H1 (cell line): ENCODE measurements at regions of chr10 and their contacts with region 1.

Region 1: DNA sequence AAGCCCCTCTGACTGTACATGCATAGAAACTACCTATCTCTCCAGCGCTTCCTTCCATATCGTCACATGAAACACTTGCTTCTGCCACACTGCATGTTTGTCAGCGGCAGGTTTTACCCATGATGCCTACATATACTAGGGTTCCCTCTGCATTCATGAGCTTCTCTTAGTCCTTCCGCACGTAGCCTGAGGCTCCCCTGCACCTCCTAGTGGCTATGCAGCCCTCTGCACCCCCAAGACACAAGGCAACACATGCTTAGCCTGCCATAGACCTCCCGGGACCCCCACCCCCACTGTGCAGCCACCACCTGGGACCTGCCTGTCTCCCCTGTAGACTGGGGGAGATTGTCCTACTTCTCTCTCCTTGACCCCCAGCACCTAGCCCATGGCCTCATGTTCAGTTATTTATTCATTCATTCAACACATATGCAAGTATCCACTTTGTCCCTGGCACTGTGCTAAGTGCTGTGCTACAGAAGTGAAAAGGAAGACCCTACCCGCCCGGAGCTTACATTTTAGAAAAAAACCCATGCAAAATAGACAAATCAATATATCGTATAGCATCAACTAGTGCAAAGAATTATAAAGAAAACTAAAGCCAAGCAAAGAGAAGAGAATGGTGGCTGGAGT is 23.5 kb downstream of the TMEM273 start:
- DNase-seq: peak in 1 of 2 experiments; percentile 78
- H3K4me3 ChIP-seq: no peak overlapping the region
- H3K27ac ChIP-seq: no peak overlapping the region
- H3K4me1 ChIP-seq: peaks cover 0 to 2% (median 0%) of the 10 kb centered on the region in 4 experiments; a peak in 2 of 7 replicates
- H3K27me3 ChIP-seq: no peaks in the 10 kb centered on the region
- CTCF ChIP-seq: peak; percentile 74 to 97 (median 92)
- EP300 ChIP-seq: no peak
- POLR2A ChIP-seq: no peak
- RAD21 ChIP-seq: peak; percentile 80 to 87

Region 2: DNA sequence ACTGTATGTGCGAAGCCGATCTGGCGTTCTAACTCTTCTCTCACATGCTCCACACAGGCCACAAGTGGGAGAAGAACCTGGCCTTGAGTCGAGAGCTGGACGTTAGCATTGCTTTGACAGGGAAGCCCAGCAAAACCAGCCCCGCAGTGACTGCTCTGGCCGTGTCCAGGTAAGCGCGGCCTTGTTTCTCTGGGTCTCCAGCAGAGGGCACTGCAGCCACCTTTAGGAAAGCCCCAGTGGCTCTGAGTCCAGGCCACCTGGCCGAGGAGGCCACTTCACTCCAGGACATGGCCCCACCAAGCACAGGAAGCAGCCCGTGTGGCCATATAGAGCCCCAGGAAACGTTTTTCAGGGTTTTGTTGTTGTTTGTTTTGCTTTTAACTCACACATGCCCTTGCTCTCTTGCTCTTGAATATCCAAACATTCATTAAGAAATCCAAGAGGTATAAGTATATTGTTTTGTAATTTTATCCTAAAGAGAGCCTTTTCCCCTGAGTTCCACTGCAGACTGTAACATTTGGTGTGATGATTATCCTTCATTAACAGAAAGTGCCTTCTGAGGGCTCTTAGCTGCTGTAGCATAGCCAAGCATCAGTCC is 183.3 kb before region 1 on chr10:
- CTCF ChIA-PET with region 1: interaction called, 17 read pairs
- POLR2A ChIA-PET with region 1: no interaction called
- DNase-seq: peak; percentile 44 to 88
- H3K4me3 ChIP-seq: no peak overlapping the region
- H3K27ac ChIP-seq: no peak overlapping the region
- H3K4me1 ChIP-seq: no peaks in the 10 kb centered on the region
- H3K27me3 ChIP-seq: no peaks in the 10 kb centered on the region
- CTCF ChIP-seq: peak; percentile 84 to 98 (median 93)
- EP300 ChIP-seq: no peak
- POLR2A ChIP-seq: no peak
- RAD21 ChIP-seq: peak; percentile 92 to 97

Region 3: GRCh38 chr10:49080071-49080470 is 84.6 kb before region 1 on chr10:
- CTCF ChIA-PET with region 1: interaction called, 12 read pairs
- POLR2A ChIA-PET with region 1: no interaction called
- DNase-seq: no peak
- H3K4me3 ChIP-seq: no peak overlapping the region
- H3K27ac ChIP-seq: no peak overlapping the region
- H3K4me1 ChIP-seq: peaks cover 2 to 13% (median 3%) of the 10 kb centered on the region in 4 experiments
- H3K27me3 ChIP-seq: no peaks in the 10 kb centered on the region; a peak in 3 of 7 replicates
- CTCF ChIP-seq: no peak
- EP300 ChIP-seq: no peak
- POLR2A ChIP-seq: no peak
- RAD21 ChIP-seq: no peak

Region 4: GRCh38 chr10:49131507-49132361 is 32.9 kb before region 1 on chr10:
- CTCF ChIA-PET with region 1: interaction called, 12 read pairs
- POLR2A ChIA-PET with region 1: no interaction called
- DNase-seq: no peak
- H3K4me3 ChIP-seq: no peak overlapping the region
- H3K27ac ChIP-seq: no peak overlapping the region
- H3K4me1 ChIP-seq: no peaks in the 10 kb centered on the region
- H3K27me3 ChIP-seq: no peaks in the 10 kb centered on the region
- CTCF ChIP-seq: no peak
- EP300 ChIP-seq: no peak
- POLR2A ChIP-seq: no peak
- RAD21 ChIP-seq: no peak

Region 5: DNA sequence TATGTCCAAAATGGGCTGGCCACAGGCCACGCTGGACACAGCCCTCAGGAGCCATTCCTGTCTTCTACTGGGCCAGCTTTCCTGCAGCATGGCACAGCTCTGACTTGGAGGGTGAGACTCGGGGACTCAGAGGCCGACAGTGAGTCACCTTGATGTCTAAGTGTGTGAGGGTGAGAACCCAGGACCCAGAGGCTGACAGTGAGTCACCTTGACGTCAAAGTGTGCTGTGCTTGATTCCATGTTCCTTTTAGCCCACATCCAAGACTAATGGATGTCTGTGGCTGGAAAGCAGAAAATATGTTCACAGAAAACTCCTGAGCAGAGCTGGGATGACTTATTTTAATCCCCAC is 24.9 kb before region 1 on chr10:
- CTCF ChIA-PET with region 1: interaction called, 15 read pairs
- POLR2A ChIA-PET with region 1: no interaction called
- DNase-seq: no peak
- H3K4me3 ChIP-seq: no peak overlapping the region
- H3K27ac ChIP-seq: no peak overlapping the region
- H3K4me1 ChIP-seq: peaks cover 1 to 6% (median 3%) of the 10 kb centered on the region in 4 experiments; a peak in 2 of 7 replicates
- H3K27me3 ChIP-seq: no peaks in the 10 kb centered on the region
- CTCF ChIP-seq: no peak
- EP300 ChIP-seq: no peak
- POLR2A ChIP-seq: no peak
- RAD21 ChIP-seq: no peak

Region 6: GRCh38 chr10:49153971-49154370 is 10.7 kb before region 1 on chr10:
- CTCF ChIA-PET with region 1: interaction called, 27 read pairs
- POLR2A ChIA-PET with region 1: no interaction called
- DNase-seq: no peak
- H3K4me3 ChIP-seq: no peak overlapping the region
- H3K27ac ChIP-seq: no peak overlapping the region
- H3K4me1 ChIP-seq: peaks cover 0 to 2% (median 0%) of the 10 kb centered on the region in 4 experiments; a peak in 1 of 7 replicates
- H3K27me3 ChIP-seq: no peaks in the 10 kb centered on the region
- CTCF ChIP-seq: no peak
- EP300 ChIP-seq: no peak
- POLR2A ChIP-seq: no peak
- RAD21 ChIP-seq: no peak

Region 7: DNA sequence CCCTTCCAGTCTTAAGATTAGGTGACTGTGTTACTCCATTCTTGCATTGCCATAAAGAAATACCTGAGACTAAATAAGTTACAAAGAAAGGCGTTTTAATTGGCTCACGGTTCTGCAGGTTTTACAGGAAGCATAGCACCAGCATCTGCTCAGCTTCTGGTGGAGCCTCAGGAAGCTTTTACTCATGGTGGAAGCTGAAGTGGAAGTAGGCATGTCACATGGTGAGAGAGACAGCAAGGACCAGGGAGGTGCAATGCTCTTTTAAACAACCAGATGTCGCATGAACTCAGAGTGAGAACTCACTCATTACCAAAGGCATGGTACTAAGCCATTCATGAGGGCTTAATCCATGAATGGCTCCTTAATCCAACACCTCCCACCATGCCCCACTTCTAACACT is 57.5 kb after region 1 on chr10:
- CTCF ChIA-PET with region 1: no interaction called
- POLR2A ChIA-PET with region 1: no interaction called
- DNase-seq: no peak
- H3K4me3 ChIP-seq: no peak overlapping the region
- H3K27ac ChIP-seq: no peak overlapping the region
- H3K4me1 ChIP-seq: no peaks in the 10 kb centered on the region
- H3K27me3 ChIP-seq: no peaks in the 10 kb centered on the region
- CTCF ChIP-seq: peak in 1 of 3 experiments; percentile 8; a peak in 1 of 4 replicates
- EP300 ChIP-seq: no peak
- POLR2A ChIP-seq: no peak
- RAD21 ChIP-seq: 0 out of 4 replicates have a peak, but pooled peaks of 1 of the 2 experiments have one; percentile 9